ENCODE measurements at regions of chrX and their contacts with region 1.

Region 1: DNA sequence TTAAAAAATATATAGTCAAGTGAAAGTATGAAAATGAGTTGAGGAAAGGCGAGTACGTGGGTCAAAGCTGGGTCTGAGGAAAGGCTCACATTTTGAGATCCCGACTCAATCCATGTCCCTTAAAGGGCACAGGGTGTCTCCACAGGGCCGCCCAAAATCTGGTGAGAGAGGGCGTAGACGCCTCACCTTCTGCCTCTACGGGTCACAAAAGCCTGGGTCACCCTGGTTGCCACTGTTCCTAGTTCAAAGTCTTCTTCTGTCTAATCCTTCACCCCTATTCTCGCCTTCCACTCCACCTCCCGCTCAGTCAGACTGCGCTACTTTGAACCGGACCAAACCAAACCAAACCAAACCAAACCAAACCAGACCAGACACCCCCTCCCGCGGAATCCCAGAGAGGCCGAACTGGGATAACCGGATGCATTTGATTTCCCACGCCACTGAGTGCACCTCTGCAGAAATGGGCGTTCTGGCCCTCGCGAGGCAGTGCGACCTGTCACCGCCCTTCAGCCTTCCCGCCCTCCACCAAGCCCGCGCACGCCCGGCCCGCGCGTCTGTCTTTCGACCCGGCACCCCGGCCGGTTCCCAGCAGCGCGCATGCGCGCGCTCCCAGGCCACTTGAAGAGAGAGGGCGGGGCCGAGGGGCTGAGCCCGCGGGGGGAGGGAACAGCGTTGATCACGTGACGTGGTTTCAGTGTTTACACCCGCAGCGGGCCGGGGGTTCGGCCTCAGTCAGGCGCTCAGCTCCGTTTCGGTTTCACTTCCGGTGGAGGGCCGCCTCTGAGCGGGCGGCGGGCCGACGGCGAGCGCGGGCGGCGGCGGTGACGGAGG is at the start of gene FMR1:
- DNase-seq: peak; percentile 85
- H3K4me3 ChIP-seq: peak within 1 kb of the TSS; percentile 70 to 76 (median 74)
- H3K27ac ChIP-seq: peak within 1 kb of the TSS; percentile 88
- H3K4me1 ChIP-seq: no peaks in the 10 kb centered on the region
- H3K27me3 ChIP-seq: no peaks in the 10 kb centered on the region
- CTCF ChIP-seq: no peak
- total RNA-seq, gene FMR1: 28.2 to 36.3 TPM

Region 2: GRCh38 chrX:147494365-147494764 is 417.0 kb before region 1 on chrX:
- CTCF ChIA-PET with region 1: no interaction called
- dilution Hi-C with region 1: no loop called
- in situ Hi-C with region 1: no loop called
- intact Hi-C with region 1: no loop called
- DNase-seq: no peak
- H3K4me3 ChIP-seq: no peak overlapping the region
- H3K27ac ChIP-seq: no peak overlapping the region
- H3K4me1 ChIP-seq: no peaks in the 10 kb centered on the region
- H3K27me3 ChIP-seq: no peaks in the 10 kb centered on the region
- CTCF ChIP-seq: no peak

Region 3: GRCh38 chrX:148049441-148049840 is 138.0 kb after region 1 on chrX:
- CTCF ChIA-PET with region 1: no interaction called
- dilution Hi-C with region 1: no loop called
- in situ Hi-C with region 1: no loop called
- intact Hi-C with region 1: loop called (anchors 5 kb)
- DNase-seq: peak; percentile 8
- H3K4me3 ChIP-seq: no peak overlapping the region
- H3K27ac ChIP-seq: no peak overlapping the region
- H3K4me1 ChIP-seq: no peaks in the 10 kb centered on the region
- H3K27me3 ChIP-seq: no peaks in the 10 kb centered on the region
- CTCF ChIP-seq: peak; percentile 28 to 59

Region 4: GRCh38 chrX:148865277-148866210 is 954.1 kb after region 1 on chrX:
- CTCF ChIA-PET with region 1: no interaction called
- dilution Hi-C with region 1: no loop called
- in situ Hi-C with region 1: no loop called
- intact Hi-C with region 1: loop called (anchors 10 kb)
- DNase-seq: no peak
- H3K4me3 ChIP-seq: no peak overlapping the region
- H3K27ac ChIP-seq: no peak overlapping the region
- H3K4me1 ChIP-seq: peaks cover 33% of the 10 kb centered on the region
- H3K27me3 ChIP-seq: no peaks in the 10 kb centered on the region
- CTCF ChIP-seq: peak in 1 of 2 donors; percentile 11